Posterior vena cava (tissue), 2 donors: ENCODE measurements at regions of chr7 and their contacts with region 1.

Region 1: GRCh38 chr7:77524731-77525130 is 12.4 kb upstream of the PTPN12 start:
- DNase-seq: no peak

Region 2: DNA sequence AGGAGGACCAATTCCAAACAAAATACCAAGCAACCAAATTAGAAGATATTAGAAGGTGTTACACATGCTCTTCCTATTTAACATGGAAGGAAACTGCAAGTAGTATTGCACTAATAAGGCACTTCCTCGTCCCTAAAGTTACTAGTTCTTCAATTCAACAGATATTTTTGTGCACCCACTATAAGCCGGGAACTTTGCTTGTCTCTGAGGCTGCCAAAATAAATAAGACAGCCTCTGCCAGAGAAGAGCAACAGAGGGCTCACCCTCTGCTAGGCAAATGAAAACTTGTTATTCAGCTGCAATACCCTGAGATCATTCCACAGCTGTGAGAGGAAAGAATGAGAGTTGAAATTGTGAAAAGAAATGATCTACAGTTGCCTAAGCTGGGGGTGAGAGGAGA is 71.2 kb before region 1 on chr7:
- intact Hi-C with region 1: no loop called
- DNase-seq: no peak

Region 3: DNA sequence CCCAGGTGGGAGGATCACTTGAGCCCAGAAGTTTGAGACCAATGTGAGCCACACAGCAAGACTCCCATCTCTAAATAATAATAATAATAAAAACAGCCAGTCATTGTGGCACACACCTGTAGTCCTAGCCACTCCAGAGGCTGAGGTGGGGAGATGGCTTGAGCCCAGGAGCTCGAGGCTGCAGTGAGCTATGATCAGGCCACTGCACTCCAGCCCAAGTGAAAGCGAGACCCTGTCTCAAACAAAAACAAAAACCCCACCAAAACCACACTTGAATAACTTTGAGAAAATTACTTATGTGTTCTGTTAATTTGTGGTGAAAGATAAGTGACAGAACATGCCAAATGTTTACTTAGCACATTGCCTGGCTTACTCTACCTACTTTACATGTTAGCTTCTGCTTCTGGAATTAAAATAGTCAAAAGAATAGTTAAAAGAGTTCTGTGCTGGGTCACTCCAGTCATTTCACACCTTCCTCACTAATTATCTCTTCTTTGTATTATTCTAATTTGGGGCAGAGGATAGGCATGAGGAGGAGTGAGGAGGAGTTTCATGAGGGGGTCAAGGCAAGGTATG is 263.7 kb after region 1 on chr7:
- intact Hi-C with region 1: loop called in 1 of 2 experiments (anchors 5 kb)
- DNase-seq: no peak